Endothelial cell of umbilical vein (primary cell): ENCODE measurements at regions of chr2 and their contacts with region 1.

Region 1: DNA sequence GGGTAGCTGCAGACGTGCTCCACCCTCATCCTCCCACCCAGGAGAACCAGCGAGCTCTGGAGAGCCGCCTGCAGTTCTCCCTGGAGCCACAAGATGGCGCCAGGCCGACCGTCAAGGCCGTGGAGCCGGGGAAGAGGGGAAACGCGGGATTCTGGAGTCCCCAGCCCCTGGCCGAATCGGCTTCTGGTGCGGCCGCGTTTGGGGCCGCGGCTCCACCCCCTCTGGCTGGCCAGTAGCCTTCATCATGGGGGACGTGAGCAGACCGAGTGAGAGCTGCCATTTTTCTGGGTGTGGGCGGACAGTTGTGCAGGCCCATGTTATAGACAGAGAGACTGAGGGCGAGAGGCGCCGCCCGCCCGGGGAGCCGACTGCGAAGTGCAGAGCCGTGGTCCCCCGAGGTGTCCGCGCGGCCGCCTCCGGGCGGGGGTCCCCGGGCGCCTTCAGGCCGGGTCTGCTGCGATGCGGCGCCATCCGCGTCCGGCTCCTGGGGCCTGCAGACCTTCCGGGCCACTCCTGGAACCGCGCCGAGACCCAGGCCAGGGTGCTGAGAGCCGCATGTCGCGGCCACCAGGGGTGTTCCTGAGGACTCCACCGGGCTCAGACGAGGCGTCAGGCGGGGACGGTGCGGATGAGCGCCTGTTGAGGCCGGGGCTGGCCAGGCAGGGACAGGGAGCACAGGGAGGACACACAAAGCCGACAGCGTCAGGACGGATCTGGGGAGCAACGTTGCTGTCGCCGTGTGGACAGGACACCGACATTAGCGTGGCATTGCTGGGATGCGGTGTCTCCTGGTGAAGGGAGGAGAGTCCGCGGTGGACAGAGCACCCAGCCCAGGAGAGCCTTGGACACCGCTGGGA is 418.2 kb upstream of the HS6ST1 start:
- DNase-seq: peak; percentile 50
- H3K4me3 ChIP-seq: peak overlapping the region in 1 of 3 experiments; percentile 14
- H3K27ac ChIP-seq: no peak overlapping the region
- H3K4me1 ChIP-seq: peaks cover 3% of the 10 kb centered on the region
- H3K27me3 ChIP-seq: no peaks in the 10 kb centered on the region
- CTCF ChIP-seq: peak; percentile 94 to 99
- POLR2A ChIP-seq: no peak

Region 2: GRCh38 chr2:128187032-128187654 is 549.8 kb before region 1 on chr2:
- CTCF ChIA-PET with region 1: no interaction called
- POLR2A ChIA-PET with region 1: no interaction called
- dilution Hi-C with region 1: no loop called
- intact Hi-C with region 1: loop called (anchors 10 kb)
- DNase-seq: peak; percentile 85
- H3K4me3 ChIP-seq: no peak overlapping the region
- H3K27ac ChIP-seq: peak overlapping the region; percentile 81
- H3K4me1 ChIP-seq: peaks cover 10% of the 10 kb centered on the region
- H3K27me3 ChIP-seq: no peaks in the 10 kb centered on the region
- CTCF ChIP-seq: no peak
- POLR2A ChIP-seq: no peak

Region 3: GRCh38 chr2:128435576-128436478 is 301.1 kb before region 1 on chr2:
- CTCF ChIA-PET with region 1: no interaction called
- POLR2A ChIA-PET with region 1: no interaction called
- dilution Hi-C with region 1: no loop called
- intact Hi-C with region 1: no loop called
- DNase-seq: no peak
- H3K4me3 ChIP-seq: no peak overlapping the region
- H3K27ac ChIP-seq: no peak overlapping the region
- H3K4me1 ChIP-seq: no peaks in the 10 kb centered on the region
- H3K27me3 ChIP-seq: peaks cover 0 to 13% of the 10 kb centered on the region in 2 experiments
- CTCF ChIP-seq: no peak
- POLR2A ChIP-seq: no peak

Region 4: GRCh38 chr2:128722489-128722888 is 14.4 kb before region 1 on chr2:
- CTCF ChIA-PET with region 1: interaction called, 15 read pairs
- POLR2A ChIA-PET with region 1: no interaction called
- dilution Hi-C with region 1: no loop called
- intact Hi-C with region 1: no loop called
- DNase-seq: no peak
- H3K4me3 ChIP-seq: no peak overlapping the region
- H3K27ac ChIP-seq: no peak overlapping the region
- H3K4me1 ChIP-seq: no peaks in the 10 kb centered on the region
- H3K27me3 ChIP-seq: no peaks in the 10 kb centered on the region
- CTCF ChIP-seq: no peak
- POLR2A ChIP-seq: no peak

Region 5: GRCh38 chr2:129849559-129850160 is 1112.7 kb after region 1 on chr2:
- CTCF ChIA-PET with region 1: interaction called, 5 read pairs
- POLR2A ChIA-PET with region 1: no interaction called
- dilution Hi-C with region 1: no loop called
- intact Hi-C with region 1: loop called (anchors 1 kb)
- DNase-seq: peak; percentile 74
- H3K4me3 ChIP-seq: no peak overlapping the region
- H3K27ac ChIP-seq: no peak overlapping the region
- H3K4me1 ChIP-seq: peaks cover 2% of the 10 kb centered on the region
- H3K27me3 ChIP-seq: no peaks in the 10 kb centered on the region
- CTCF ChIP-seq: peak; percentile 37 to 38
- POLR2A ChIP-seq: no peak

Region 6: GRCh38 chr2:129923265-129924091 is 1186.6 kb after region 1 on chr2:
- CTCF ChIA-PET with region 1: interaction called, 10 read pairs
- POLR2A ChIA-PET with region 1: no interaction called
- dilution Hi-C with region 1: no loop called
- intact Hi-C with region 1: no loop called
- DNase-seq: peak; percentile 36
- H3K4me3 ChIP-seq: no peak overlapping the region
- H3K27ac ChIP-seq: no peak overlapping the region
- H3K4me1 ChIP-seq: no peaks in the 10 kb centered on the region
- H3K27me3 ChIP-seq: no peaks in the 10 kb centered on the region
- CTCF ChIP-seq: peak; percentile 12 to 37
- POLR2A ChIP-seq: no peak